Esophagus muscularis mucosa (tissue), 4 donors: ENCODE measurements at regions of chr3 and their contacts with region 1.

Region 1: GRCh38 chr3:112734718-112735350 is 93.9 kb upstream of the CCDC80 start:
- DNase-seq: no peak
- H3K4me3 ChIP-seq: no peak overlapping the region
- H3K27ac ChIP-seq: no peak overlapping the region
- H3K4me1 ChIP-seq: peaks cover 0 to 4% (median 0%) of the 10 kb centered on the region in 4 donors
- H3K27me3 ChIP-seq: no peaks in the 10 kb centered on the region
- CTCF ChIP-seq: peak; percentile 51 to 67 (median 53)
- EP300 ChIP-seq: no peak
- POLR2A ChIP-seq: no peak

Region 2: DNA sequence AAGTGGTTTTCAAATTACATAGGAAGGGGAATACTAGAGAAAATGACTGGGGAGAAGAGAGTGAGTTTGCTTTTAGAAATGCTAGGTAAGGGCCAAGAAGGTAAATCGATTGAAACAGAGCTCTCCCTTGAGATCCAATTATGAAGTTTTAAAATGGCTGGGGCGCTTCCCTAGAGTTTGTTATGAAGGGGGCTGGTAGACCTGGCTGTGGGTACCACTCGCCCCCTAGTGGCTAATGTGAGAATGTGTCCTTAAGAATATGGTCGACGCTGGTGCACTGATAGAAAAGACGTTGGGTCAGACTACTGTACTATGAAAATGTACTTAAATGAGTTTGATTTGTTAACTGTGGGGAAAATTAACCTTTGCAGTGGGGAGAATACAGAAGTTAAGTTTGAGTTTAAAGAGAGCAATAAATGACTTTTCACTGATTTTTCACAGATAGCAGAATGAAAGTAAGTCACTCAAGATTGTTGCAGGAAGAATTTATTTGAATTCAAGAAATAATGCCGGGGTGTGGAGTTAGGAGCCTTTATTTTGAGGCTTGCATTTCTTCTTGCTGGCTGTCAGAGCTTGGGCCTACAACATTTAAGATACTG is 691.1 kb before region 1 on chr3:
- intact Hi-C with region 1: no loop called
- DNase-seq: no peak
- H3K4me3 ChIP-seq: peak overlapping the region in 3 of 4 donors; percentile 7 to 24 (median 10)
- H3K27ac ChIP-seq: no peak overlapping the region
- H3K4me1 ChIP-seq: peaks cover 0 to 9% (median 2%) of the 10 kb centered on the region in 4 donors
- H3K27me3 ChIP-seq: no peaks in the 10 kb centered on the region
- CTCF ChIP-seq: peak; percentile 72 to 79 (median 77)
- EP300 ChIP-seq: no peak
- POLR2A ChIP-seq: no peak

Region 3: DNA sequence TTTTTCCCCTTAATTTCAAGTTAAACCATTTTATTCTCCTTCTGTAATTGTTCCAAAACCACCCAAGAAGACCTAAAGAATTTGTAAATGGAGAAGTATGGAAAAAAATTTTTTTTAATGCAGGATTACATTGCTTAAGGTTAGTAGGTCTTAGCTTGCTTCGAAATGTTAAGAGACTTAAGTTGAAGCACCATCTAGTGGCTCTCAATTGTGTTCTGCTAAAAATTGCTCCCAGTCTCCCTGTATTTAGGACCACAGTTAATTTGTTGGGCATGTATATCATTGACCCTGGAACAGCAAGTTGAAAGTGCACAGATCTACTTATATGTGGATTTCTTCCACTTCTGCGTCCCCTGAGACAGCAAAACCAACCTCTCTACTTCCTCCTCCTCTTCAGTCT is 79.4 kb after region 1 on chr3:
- intact Hi-C with region 1: loop called (anchors 5 kb)
- DNase-seq: no peak
- H3K4me3 ChIP-seq: no peak overlapping the region
- H3K27ac ChIP-seq: peak overlapping the region in 2 of 4 donors; percentile 66 to 74
- H3K4me1 ChIP-seq: peaks cover 0 to 39% (median 35%) of the 10 kb centered on the region in 4 donors
- H3K27me3 ChIP-seq: no peaks in the 10 kb centered on the region
- CTCF ChIP-seq: peak; percentile 45 to 53 (median 46)
- EP300 ChIP-seq: no peak
- POLR2A ChIP-seq: no peak

Region 4: DNA sequence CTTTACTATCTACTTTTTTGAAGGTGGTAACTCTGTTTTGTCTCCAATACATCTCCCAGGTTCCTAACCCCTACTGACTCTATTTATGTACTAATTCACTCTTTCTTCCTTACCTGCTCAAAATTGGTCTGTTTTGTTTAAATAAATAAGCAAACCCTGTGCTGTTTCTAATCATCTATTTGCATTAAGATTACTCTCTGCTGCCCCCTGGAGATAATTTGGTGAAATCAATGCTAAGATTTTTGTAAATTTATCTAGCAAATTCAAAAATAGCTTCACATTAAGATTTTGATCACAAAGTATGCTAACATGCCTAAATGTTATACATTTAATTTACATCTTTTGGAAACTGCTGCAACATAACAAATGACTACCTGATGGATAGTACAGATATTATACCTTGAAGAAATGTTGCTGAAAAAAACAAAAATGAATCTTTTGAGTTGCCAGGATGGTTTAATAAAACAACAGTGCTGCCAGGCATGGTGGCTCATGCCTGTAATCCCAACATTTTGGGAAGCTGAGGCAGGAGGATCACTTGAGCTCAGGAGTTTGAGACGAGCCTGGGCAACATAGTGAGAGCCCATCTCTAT is 244.5 kb after region 1 on chr3:
- intact Hi-C with region 1: loop called (anchors 2 kb)
- DNase-seq: no peak
- H3K4me3 ChIP-seq: no peak overlapping the region
- H3K27ac ChIP-seq: no peak overlapping the region
- H3K4me1 ChIP-seq: peaks cover 0 to under 1% (median 0%) of the 10 kb centered on the region in 4 donors
- H3K27me3 ChIP-seq: no peaks in the 10 kb centered on the region
- CTCF ChIP-seq: peak; percentile 71 to 75 (median 73)
- EP300 ChIP-seq: no peak
- POLR2A ChIP-seq: no peak